Activated CD4-positive, alpha-beta memory T cell treated with anti-CD3 and anti-CD28 coated beads, Interleukin-2, amount 10 ng/mL, durations not matched to agents 7 days and 5 days (primary cell): ENCODE measurements at regions of chr12 and their contacts with region 1.

Region 1: GRCh38 chr12:57111031-57111734 is at the start of gene STAT6:
- DNase-seq: peak; percentile 91
- H3K4me3 Mint-ChIP-seq: peak within 1 kb of the TSS; percentile 92
- H3K27ac Mint-ChIP-seq: peak within 1 kb of the TSS; percentile 92
- H3K4me1 Mint-ChIP-seq: peaks cover 42% of the 10 kb centered on the region
- H3K27me3 Mint-ChIP-seq: peaks cover 4% of the 10 kb centered on the region
- total RNA-seq, gene STAT6: 127 to 128 TPM

Region 2: GRCh38 chr12:56688129-56688845 is 422.9 kb before region 1 on chr12 and contains the start of gene PTGES3:
- CTCF ChIA-PET with region 1: no interaction called
- POLR2A ChIA-PET with region 1: interaction called, 15 read pairs
- DNase-seq: peak; percentile 99
- H3K4me3 Mint-ChIP-seq: peak within 1 kb of the TSS; percentile 100
- H3K27ac Mint-ChIP-seq: peak within 1 kb of the TSS; percentile 100
- H3K4me1 Mint-ChIP-seq: peaks cover 22% of the 10 kb centered on the region
- H3K27me3 Mint-ChIP-seq: no peaks in the 10 kb centered on the region
- total RNA-seq, gene PTGES3: 240 to 241 TPM

Region 3: GRCh38 chr12:57005980-57006808 is 105.0 kb before region 1 on chr12 and contains the start of gene ZBTB39:
- CTCF ChIA-PET with region 1: interaction called, 39 read pairs
- POLR2A ChIA-PET with region 1: interaction called, 21 read pairs
- DNase-seq: peak; percentile 67
- H3K4me3 Mint-ChIP-seq: peak within 1 kb of the TSS; percentile 84
- H3K27ac Mint-ChIP-seq: peak within 1 kb of the TSS; percentile 65
- H3K4me1 Mint-ChIP-seq: peaks cover 40% of the 10 kb centered on the region
- H3K27me3 Mint-ChIP-seq: no peaks in the 10 kb centered on the region
- total RNA-seq, gene ZBTB39: 7.7 to 7.8 TPM

Region 4: GRCh38 chr12:57063991-57064685 is 47.0 kb before region 1 on chr12:
- CTCF ChIA-PET with region 1: interaction called, 230 read pairs
- POLR2A ChIA-PET with region 1: interaction called, 131 read pairs
- DNase-seq: peak; percentile 54
- H3K4me3 Mint-ChIP-seq: peak overlapping the region; percentile 62
- H3K27ac Mint-ChIP-seq: peak overlapping the region; percentile 89
- H3K4me1 Mint-ChIP-seq: peaks cover 35% of the 10 kb centered on the region
- H3K27me3 Mint-ChIP-seq: no peaks in the 10 kb centered on the region

Region 5: GRCh38 chr12:57088459-57089248 is 22.5 kb before region 1 on chr12 and contains the start of gene NAB2:
- CTCF ChIA-PET with region 1: interaction called, 69 read pairs
- POLR2A ChIA-PET with region 1: interaction called, 247 read pairs
- DNase-seq: peak; percentile 96
- H3K4me3 Mint-ChIP-seq: peak within 1 kb of the TSS; percentile 89
- H3K27ac Mint-ChIP-seq: peak within 1 kb of the TSS; percentile 90
- H3K4me1 Mint-ChIP-seq: peaks cover 64% of the 10 kb centered on the region
- H3K27me3 Mint-ChIP-seq: no peaks in the 10 kb centered on the region
- total RNA-seq, gene NAB2: 8.7 to 9.6 TPM

Region 6: DNA sequence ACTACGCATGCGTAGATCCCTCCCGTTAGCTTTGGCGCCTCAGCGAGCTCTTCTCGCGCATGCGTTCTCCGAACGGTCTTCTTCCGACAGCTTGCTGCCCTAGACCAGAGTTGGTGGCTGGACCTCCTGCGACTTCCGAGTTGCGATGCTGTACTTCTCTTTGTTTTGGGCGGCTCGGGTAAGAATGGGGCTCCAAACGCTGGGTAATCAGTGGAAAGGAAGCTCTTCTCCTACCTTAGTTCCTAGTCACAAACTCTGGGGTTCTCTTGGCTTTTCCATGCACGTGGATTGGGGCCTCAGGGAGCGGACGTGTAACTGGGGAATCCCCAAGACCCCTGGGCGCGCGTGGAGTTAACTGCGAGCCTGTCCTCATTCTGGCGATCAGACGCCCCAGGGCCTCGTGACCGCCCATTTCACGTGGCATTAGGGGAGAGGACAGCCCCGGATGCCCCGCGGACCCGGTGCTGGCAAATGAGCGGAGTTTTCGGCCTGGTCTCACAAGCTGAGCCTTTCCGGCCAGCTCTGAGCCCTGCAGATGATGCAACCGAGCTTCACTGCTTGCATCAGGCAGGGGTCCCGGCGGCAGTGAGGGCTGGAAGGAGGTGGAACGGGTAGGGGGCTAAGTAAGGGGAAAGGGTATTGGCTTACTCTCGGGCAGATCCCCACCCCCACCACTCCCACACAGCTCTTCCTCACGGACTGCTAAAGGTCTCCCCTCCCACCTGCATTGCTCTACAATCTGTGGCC is 118.6 kb after region 1 on chr12 and contains the start of gene SHMT2:
- CTCF ChIA-PET with region 1: interaction called, 6 read pairs
- POLR2A ChIA-PET with region 1: interaction called, 10 read pairs
- DNase-seq: peak; percentile 93
- H3K4me3 Mint-ChIP-seq: peak within 1 kb of the TSS; percentile 94
- H3K27ac Mint-ChIP-seq: peak within 1 kb of the TSS; percentile 80
- H3K4me1 Mint-ChIP-seq: peaks cover 75% of the 10 kb centered on the region
- H3K27me3 Mint-ChIP-seq: peaks cover 22% of the 10 kb centered on the region
- total RNA-seq, gene SHMT2: 224 to 244 TPM

Region 7: DNA sequence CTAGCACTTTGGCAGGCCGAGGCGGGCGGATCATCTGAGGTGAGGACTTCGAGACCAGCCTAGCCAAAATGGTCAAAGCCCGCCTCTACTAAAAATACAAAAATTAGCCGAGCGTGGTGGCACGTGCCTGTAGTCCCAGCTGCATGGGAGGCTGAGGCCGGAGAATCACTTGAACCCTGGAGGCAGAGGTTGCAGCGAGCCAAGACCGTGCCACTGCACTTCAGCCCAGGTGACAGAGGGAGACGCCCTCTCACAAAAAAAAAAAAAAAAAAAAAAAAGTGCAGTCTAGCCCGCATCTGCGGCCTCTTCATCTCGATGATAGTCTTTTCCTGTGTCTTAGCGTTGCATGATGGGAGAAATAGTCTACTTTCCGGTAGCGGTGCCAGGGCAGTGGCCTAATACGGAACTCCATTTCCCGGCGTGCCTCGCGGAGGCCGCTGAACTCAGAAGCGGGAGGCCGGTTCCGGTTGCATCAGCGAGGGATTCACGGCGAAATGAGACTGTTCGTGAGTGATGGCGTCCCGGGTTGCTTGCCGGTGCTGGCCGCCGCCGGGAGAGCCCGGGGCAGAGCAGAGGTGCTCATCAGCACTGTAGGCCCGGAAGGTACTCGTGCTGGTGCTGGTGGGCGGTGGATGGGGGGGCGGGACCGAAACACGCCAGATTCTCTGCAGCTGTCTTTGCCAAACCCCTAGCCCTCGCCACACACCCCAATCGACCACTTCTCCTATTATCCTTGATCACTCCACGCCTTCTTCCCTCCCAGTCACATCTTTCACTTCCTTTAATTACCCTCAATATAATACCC is 376.6 kb after region 1 on chr12 and contains the start of gene MARS1:
- CTCF ChIA-PET with region 1: no interaction called
- POLR2A ChIA-PET with region 1: no interaction called
- DNase-seq: peak; percentile 95
- H3K4me3 Mint-ChIP-seq: peak within 1 kb of the TSS; percentile 86
- H3K27ac Mint-ChIP-seq: peak within 1 kb of the TSS; percentile 78
- H3K4me1 Mint-ChIP-seq: peaks cover 39% of the 10 kb centered on the region
- H3K27me3 Mint-ChIP-seq: no peaks in the 10 kb centered on the region
- total RNA-seq, gene MARS1: 262 to 282 TPM